ENCODE measurements at regions of chr6 and their contacts with region 1.

Region 1: GRCh38 chr6:167826230-167826895 is 348 bp upstream of the AFDN start:
- DNase-seq: peak; percentile 80
- ATAC-seq: peak; percentile 92
- H3K4me3 Mint-ChIP-seq: peak overlapping the region; percentile 76
- H3K27ac Mint-ChIP-seq: peak overlapping the region; percentile 8
- H3K4me1 Mint-ChIP-seq: peaks cover 23% of the 10 kb centered on the region
- H3K27me3 Mint-ChIP-seq: peaks cover 58% of the 10 kb centered on the region

Region 2: GRCh38 chr6:167706313-167707109 is 119.9 kb before region 1 on chr6:
- CTCF ChIA-PET with region 1: no interaction called
- POLR2A ChIA-PET with region 1: no interaction called
- intact Hi-C with region 1: loop called (anchors 2 to 10 kb)
- DNase-seq: peak; percentile 82
- ATAC-seq: peak; percentile 95
- H3K4me3 Mint-ChIP-seq: peak overlapping the region; percentile 36
- H3K27ac Mint-ChIP-seq: no peak overlapping the region
- H3K4me1 Mint-ChIP-seq: peaks cover 28% of the 10 kb centered on the region
- H3K27me3 Mint-ChIP-seq: peaks cover 63% of the 10 kb centered on the region

Region 3: GRCh38 chr6:167855825-167856425 is 29.6 kb after region 1 on chr6:
- CTCF ChIA-PET with region 1: no interaction called
- POLR2A ChIA-PET with region 1: no interaction called
- intact Hi-C with region 1: no loop called
- DNase-seq: peak; percentile 7
- ATAC-seq: peak; percentile 77
- H3K4me3 Mint-ChIP-seq: no peak overlapping the region
- H3K27ac Mint-ChIP-seq: no peak overlapping the region
- H3K4me1 Mint-ChIP-seq: peaks cover 6% of the 10 kb centered on the region
- H3K27me3 Mint-ChIP-seq: peaks cover 15% of the 10 kb centered on the region

Measured in activated CD4-positive, alpha-beta T cell treated with anti-CD3 and anti-CD28 coated beads for 36 hours (primary cell).